ENCODE measurements at regions of chr1 and their contacts with region 1.

Region 1: DNA sequence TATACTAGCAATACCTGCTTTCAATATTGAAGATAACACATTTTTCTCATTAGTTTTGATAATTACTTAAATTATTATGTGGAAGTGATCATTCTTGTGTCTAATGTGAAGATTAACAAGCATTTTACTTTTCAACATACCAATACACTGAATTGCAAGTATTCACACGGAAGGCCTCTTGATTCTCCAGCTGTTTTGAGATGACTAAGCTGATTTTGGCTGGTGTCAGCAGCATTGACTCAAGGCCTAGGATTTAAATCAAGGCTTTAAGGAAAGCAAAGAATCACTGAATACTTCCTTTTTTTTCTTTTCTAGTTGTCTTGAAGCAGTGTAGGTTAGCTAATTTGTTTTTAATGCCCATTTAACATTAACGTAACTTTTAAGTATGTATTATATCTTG is 373.7 kb downstream of the SRGAP2C start:
- DNase-seq: no peak
- H3K4me3 ChIP-seq: no peak overlapping the region
- H3K4me3 Mint-ChIP-seq: peak overlapping the region in 6 of 8 donors; percentile 65 to 80 (median 76)
- H3K27ac ChIP-seq: no peak overlapping the region
- H3K27ac Mint-ChIP-seq: peak overlapping the region in 1 of 7 donors; percentile 93
- H3K4me1 ChIP-seq: peaks cover 14% of the 10 kb centered on the region
- H3K4me1 Mint-ChIP-seq: peaks cover 23 to 51% (median 33%) of the 10 kb centered on the region in 4 donors
- H3K27me3 ChIP-seq: no peaks in the 10 kb centered on the region
- H3K27me3 Mint-ChIP-seq: no peaks in the 10 kb centered on the region

Region 2: DNA sequence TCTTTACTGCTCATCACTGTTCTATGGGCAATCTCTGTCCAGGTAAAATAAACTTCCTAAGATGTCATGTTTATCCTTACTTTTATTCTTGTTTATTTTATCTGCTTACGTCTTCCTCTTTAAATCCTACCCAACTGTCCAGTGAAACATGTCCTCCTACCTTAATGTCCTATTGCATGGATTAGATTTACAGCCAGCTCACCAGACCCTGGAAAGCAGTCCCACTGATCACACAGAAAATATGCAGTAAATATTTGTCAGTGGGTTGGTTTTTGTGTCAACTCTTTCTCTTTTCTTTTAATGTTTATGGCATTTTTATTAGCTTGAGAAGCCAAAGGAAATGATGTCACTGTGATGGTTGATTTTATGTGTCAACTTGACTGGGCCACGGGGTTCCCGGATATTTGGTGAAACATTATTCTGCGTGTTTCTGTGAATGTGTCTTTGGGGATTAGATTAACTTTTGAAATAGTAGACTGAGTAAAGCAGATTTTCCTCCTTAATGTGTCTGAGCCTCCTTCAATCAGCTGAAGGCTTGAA is 115.4 kb before region 1 on chr1:
- CTCF ChIA-PET with region 1: no interaction called
- POLR2A ChIA-PET with region 1: no interaction called
- intact Hi-C with region 1: no loop called
- DNase-seq: no peak
- H3K4me3 ChIP-seq: no peak overlapping the region
- H3K4me3 Mint-ChIP-seq: peak overlapping the region in 1 of 8 donors; percentile 18
- H3K27ac ChIP-seq: no peak overlapping the region
- H3K27ac Mint-ChIP-seq: no peak overlapping the region
- H3K4me1 ChIP-seq: peaks cover 10% of the 10 kb centered on the region
- H3K4me1 Mint-ChIP-seq: peaks cover 9 to 27% (median 15%) of the 10 kb centered on the region in 4 donors
- H3K27me3 ChIP-seq: no peaks in the 10 kb centered on the region
- H3K27me3 Mint-ChIP-seq: no peaks in the 10 kb centered on the region

Region 3: DNA sequence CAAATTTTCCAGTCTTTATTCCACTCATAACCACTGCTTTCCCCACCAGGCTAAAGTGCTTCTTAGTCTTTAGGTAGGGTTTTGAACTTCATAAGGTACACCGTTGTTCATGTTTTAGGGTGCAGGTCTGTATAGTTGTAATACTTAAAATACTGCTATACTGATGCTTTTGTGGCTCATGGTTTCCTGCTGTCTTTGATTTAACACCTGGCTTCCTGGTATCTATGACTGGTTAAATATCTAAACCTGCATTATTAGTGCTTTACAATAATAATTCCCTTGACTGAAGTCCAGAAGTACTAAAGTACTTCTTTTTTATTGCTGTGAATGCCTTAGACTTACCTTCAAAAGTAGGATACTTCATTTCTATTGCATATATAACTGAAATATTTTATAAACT is 10.9 kb after region 1 on chr1:
- CTCF ChIA-PET with region 1: no interaction called
- POLR2A ChIA-PET with region 1: no interaction called
- intact Hi-C with region 1: loop called (anchors 1 kb)
- DNase-seq: peak in 1 of 5 donors; percentile 14
- H3K4me3 ChIP-seq: no peak overlapping the region
- H3K4me3 Mint-ChIP-seq: peak overlapping the region in 4 of 8 donors; percentile 38 to 58 (median 53)
- H3K27ac ChIP-seq: no peak overlapping the region
- H3K27ac Mint-ChIP-seq: peak overlapping the region in 3 of 7 donors; percentile 31 to 81 (median 51)
- H3K4me1 ChIP-seq: peaks cover 15% of the 10 kb centered on the region
- H3K4me1 Mint-ChIP-seq: peaks cover 13 to 30% (median 21%) of the 10 kb centered on the region in 4 donors
- H3K27me3 ChIP-seq: no peaks in the 10 kb centered on the region
- H3K27me3 Mint-ChIP-seq: no peaks in the 10 kb centered on the region

Region 4: DNA sequence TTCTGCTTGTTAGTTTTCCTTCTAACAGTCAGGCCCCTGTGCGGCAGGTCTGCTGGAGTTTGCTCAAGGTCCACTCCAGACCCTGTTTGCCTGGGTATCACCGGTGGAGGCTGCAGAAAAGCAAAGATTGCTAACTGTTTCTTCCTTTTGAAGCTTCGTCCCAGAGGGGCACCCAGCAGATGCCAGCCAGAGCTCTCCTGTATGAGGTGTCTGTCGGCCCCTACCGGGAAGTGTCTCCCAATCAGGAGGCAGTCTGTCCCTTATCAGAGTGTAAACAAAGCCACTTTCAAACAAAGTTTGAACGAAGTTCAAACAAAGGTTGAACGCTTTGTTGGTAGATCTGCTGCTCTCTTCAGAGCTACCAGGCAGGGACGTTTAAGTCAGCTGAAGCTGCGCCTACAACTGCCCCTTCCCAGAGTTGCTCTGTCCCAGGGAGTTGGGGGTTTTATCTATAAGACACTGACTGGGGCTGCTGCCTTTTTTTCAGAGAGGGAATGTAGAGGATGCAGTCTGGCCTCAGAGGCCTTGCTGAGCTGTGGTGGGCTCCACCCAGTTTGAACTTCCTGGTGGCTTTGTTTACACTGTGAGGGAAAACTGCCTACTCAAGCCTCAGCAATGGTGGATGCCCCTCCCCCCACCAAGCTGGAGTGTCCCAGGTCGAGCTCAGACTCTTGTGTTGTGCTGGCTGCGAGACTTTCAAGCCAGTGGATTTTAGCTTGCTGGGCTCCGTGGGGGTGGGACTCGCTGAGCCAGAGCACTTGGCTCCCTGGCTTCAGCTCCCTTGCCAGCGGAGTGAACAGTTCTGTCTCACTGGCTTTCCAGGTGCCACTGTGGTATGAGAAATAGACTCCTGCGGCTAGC is 28.1 kb after region 1 on chr1:
- CTCF ChIA-PET with region 1: no interaction called
- POLR2A ChIA-PET with region 1: no interaction called
- intact Hi-C with region 1: loop called (anchors 5 kb)
- DNase-seq: peak in 2 of 5 donors; percentile 8 to 13
- H3K4me3 ChIP-seq: no peak overlapping the region
- H3K4me3 Mint-ChIP-seq: peak overlapping the region in 7 of 8 donors; percentile 29 to 76 (median 64)
- H3K27ac ChIP-seq: no peak overlapping the region
- H3K27ac Mint-ChIP-seq: peak overlapping the region in 6 of 7 donors; percentile 13 to 83 (median 62)
- H3K4me1 ChIP-seq: peaks cover 34% of the 10 kb centered on the region
- H3K4me1 Mint-ChIP-seq: peaks cover 31 to 58% (median 41%) of the 10 kb centered on the region in 4 donors
- H3K27me3 ChIP-seq: no peaks in the 10 kb centered on the region
- H3K27me3 Mint-ChIP-seq: no peaks in the 10 kb centered on the region